Left cardiac atrium (tissue), 4 donors: ENCODE measurements at regions of chr15 and their contacts with region 1.

Region 1: DNA sequence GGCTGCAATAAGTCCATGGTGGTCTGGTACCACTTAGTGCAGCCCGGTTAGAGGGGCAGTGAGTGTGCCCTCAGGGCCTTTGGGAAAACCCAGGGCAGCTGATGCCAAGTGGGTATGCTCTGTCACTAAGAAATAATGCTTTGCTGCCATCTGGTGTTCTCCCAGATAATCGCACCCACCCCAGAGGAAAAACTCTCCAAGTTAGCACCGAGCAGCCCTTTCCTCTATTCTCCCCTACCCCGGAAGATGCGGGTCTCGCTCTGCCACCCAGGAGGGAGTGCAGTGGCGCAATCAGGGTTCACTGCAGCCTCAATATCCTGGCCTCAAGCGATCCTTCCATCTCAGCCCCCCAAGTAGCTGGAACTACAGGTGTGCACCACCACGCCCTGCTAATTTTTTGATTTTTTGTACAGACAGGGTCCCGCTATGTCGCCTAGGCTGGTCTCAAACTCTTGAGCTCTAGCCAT is 21.3 kb upstream of the DAPK2 start:
- DNase-seq: peak; percentile 58
- ATAC-seq: peak; percentile 74 to 75

Region 2: GRCh38 chr15:63610200-63610841 is 457.3 kb before region 1 on chr15:
- intact Hi-C with region 1: loop called in 1 of 2 experiments (anchors 10 kb)
- DNase-seq: peak; percentile 69
- ATAC-seq: peak; percentile 79 to 82

Region 3: DNA sequence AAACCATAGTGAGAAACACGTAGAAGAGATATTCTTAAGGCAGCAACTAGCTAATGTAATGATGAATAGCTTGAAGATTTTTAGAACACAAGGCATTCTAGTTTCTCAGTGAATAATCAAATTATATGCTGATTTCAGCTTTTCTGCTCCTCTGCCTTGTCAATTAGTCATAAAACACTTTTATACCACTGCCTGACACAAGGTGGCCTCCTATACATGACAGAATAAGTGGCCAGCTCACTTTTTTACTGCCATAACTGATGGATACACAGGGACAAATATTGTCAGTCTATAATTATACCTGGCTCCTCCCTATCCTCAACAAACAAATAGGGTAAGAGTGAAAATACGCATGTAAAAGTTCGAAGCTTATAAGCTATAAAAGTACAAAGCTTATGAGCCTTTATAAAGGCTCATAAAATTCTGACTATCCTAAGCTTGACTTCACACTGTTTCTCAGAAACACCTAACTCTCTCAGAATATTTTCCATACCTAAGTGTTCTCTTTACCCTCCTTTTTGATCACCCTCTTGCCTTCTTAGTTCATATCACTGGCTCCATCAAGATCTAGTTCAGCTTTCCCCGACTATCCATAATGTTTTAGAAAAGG is 315.4 kb before region 1 on chr15:
- intact Hi-C with region 1: loop called (anchors 2 to 5 kb)
- DNase-seq: no peak
- ATAC-seq: peak; percentile 63 to 80

Region 4: DNA sequence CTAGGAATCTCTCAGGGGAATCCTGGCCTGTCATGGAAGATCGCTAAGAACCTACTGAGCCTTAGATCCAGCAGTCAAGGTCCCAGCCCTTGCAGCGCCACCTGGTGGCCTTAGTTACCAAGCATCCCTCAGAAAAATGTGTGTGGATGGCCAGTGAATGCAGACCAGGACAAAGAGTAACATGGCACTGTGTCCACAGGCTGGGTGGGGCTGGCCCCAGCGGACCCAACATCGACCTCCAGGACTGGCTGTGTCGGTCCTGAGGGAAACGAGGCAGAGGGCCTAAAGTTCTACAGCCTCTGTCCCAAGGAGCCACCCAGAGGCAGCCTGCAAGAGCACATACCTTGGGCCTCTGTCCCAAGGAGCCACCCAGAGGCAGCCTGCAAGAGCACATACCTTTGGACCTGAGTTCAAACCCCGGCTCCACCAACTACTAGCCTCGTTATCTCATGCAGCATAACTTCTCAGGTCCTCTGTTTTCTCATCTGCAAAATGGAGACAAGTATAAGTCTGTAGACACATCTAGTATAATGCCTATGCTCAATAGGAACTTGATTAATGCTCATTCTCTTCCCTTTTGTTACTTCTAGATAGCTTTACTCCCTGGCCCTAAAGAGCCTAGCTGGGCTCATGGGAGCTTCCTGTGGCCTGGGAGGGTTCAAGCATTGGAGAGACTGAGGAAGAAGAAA is 176.4 kb before region 1 on chr15:
- intact Hi-C with region 1: loop called in 1 of 2 experiments (anchors 5 kb)
- DNase-seq: peak; percentile 85
- ATAC-seq: peak; percentile 51 to 65

Region 5: DNA sequence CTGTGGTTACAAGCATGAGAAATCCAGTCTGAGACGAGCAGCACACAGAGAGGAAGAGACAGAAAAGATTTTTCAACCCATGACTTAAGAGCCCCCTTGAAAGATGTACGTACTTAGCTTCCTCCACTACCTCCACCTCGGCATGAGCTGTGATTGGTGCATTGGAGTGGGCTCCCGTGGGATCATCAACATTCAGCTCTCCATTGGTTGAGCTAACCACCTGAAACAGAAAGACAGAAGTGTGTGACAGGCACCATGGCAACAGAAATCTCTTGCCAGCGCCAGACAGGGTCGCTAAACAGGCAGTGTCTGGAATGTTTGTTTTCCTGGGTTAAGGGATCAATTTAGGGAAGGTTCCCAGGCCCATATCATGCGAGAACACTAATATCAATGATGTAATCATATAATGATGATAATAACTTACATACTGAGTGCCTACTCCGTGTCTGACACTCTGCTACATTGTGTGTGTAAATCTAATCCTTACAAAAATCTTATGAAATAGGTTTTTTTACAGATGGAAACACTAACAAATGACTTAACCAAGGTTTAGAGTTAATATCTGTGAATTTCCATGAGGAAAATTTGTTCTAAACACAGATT is 112.7 kb after region 1 on chr15:
- intact Hi-C with region 1: no loop called
- DNase-seq: no peak
- ATAC-seq: no peak

Region 6: DNA sequence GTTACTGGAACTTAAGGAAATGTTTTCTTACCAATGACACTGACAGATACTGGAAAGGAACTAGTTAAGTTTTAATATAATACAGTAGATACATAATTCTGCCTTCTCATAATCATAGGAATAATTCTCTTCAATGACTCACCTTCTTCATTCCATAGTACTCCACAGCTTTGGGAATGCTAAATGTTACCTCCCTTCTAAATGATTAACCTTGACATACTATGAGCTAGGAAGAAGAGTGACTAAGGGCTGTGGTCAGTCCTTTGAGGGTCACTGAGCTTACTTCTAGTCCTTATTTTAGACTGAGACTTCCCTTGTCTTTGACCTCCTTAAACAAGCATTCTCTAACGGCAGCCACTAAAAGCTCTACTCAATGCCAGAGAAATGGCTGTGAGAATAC is 164.8 kb after region 1 on chr15:
- intact Hi-C with region 1: no loop called
- DNase-seq: no peak
- ATAC-seq: no peak

Region 7: GRCh38 chr15:64389036-64389435 is 321.4 kb after region 1 on chr15:
- intact Hi-C with region 1: no loop called
- DNase-seq: no peak
- ATAC-seq: no peak